ENCODE measurements at regions of chr6 and their contacts with region 1.

Region 1: GRCh38 chr6:6654599-6655575 is 66.4 kb downstream of the LY86 start:
- DNase-seq: peak in 8 of 9 donors; percentile 25 to 77 (median 60)
- ATAC-seq: peak; percentile 62
- H3K4me3 ChIP-seq: no peak overlapping the region
- H3K4me3 Mint-ChIP-seq: peak overlapping the region; percentile 60 to 85 (median 76)
- H3K27ac ChIP-seq: peak overlapping the region; percentile 45
- H3K27ac Mint-ChIP-seq: peak overlapping the region; percentile 65 to 99 (median 97)
- H3K4me1 ChIP-seq: peaks cover 4 to 67% of the 10 kb centered on the region in 2 donors
- H3K4me1 Mint-ChIP-seq: peaks cover 48 to 94% (median 82%) of the 10 kb centered on the region in 7 donors
- H3K27me3 ChIP-seq: no peaks in the 10 kb centered on the region
- H3K27me3 Mint-ChIP-seq: no peaks in the 10 kb centered on the region

Region 2: GRCh38 chr6:6556738-6557505 is 98.0 kb before region 1 on chr6:
- CTCF ChIA-PET with region 1: no interaction called
- POLR2A ChIA-PET with region 1: no interaction called
- intact Hi-C with region 1: loop called (anchors 1 to 2 kb)
- DNase-seq: peak in 7 of 9 donors; percentile 30 to 68 (median 57)
- ATAC-seq: peak; percentile 76
- H3K4me3 ChIP-seq: no peak overlapping the region
- H3K4me3 Mint-ChIP-seq: no peak overlapping the region
- H3K27ac ChIP-seq: no peak overlapping the region
- H3K27ac Mint-ChIP-seq: peak overlapping the region in 5 of 9 donors; percentile 19 to 64 (median 32)
- H3K4me1 ChIP-seq: peaks cover 0 to 4% of the 10 kb centered on the region in 2 donors
- H3K4me1 Mint-ChIP-seq: peaks cover 0 to 50% (median 18%) of the 10 kb centered on the region in 7 donors
- H3K27me3 ChIP-seq: no peaks in the 10 kb centered on the region
- H3K27me3 Mint-ChIP-seq: peaks cover 0 to 15% (median 0%) of the 10 kb centered on the region in 5 donors

Region 3: GRCh38 chr6:6793388-6794250 is 138.7 kb after region 1 on chr6:
- CTCF ChIA-PET with region 1: no interaction called
- POLR2A ChIA-PET with region 1: no interaction called
- intact Hi-C with region 1: no loop called
- DNase-seq: no peak
- ATAC-seq: peak; percentile 78
- H3K4me3 ChIP-seq: no peak overlapping the region
- H3K4me3 Mint-ChIP-seq: peak overlapping the region in 4 of 10 donors; percentile 3 to 37 (median 24)
- H3K27ac ChIP-seq: no peak overlapping the region
- H3K27ac Mint-ChIP-seq: peak overlapping the region in 2 of 9 donors; percentile 6 to 37
- H3K4me1 ChIP-seq: no peaks in the 10 kb centered on the region
- H3K4me1 Mint-ChIP-seq: peaks cover 5 to 52% (median 7%) of the 10 kb centered on the region in 7 donors
- H3K27me3 ChIP-seq: no peaks in the 10 kb centered on the region
- H3K27me3 Mint-ChIP-seq: no peaks in the 10 kb centered on the region

Region 4: GRCh38 chr6:6901205-6901731 is 246.4 kb after region 1 on chr6:
- CTCF ChIA-PET with region 1: no interaction called
- POLR2A ChIA-PET with region 1: no interaction called
- intact Hi-C with region 1: no loop called
- DNase-seq: no peak
- ATAC-seq: no peak
- H3K4me3 ChIP-seq: no peak overlapping the region
- H3K4me3 Mint-ChIP-seq: no peak overlapping the region
- H3K27ac ChIP-seq: no peak overlapping the region
- H3K27ac Mint-ChIP-seq: no peak overlapping the region
- H3K4me1 ChIP-seq: no peaks in the 10 kb centered on the region
- H3K4me1 Mint-ChIP-seq: peaks cover 0 to 2% (median 0%) of the 10 kb centered on the region in 7 donors
- H3K27me3 ChIP-seq: no peaks in the 10 kb centered on the region
- H3K27me3 Mint-ChIP-seq: peaks cover 0 to 36% (median 0%) of the 10 kb centered on the region in 5 donors

Measured in naive thymus-derived CD4-positive, alpha-beta T cell (primary cell).